Stomach (tissue), 19 donors: ENCODE measurements at regions of chr12 and their contacts with region 1.

Region 1: GRCh38 chr12:40107098-40107802 is 1.4 kb upstream of the SLC2A13 start:
- DNase-seq: peak; percentile 94 to 95
- H3K4me3 ChIP-seq: peak overlapping the region; percentile 37 to 95 (median 64)
- H3K27ac ChIP-seq: peak overlapping the region in 4 of 5 donors; percentile 79 to 91 (median 90)
- H3K4me1 ChIP-seq: peaks cover 10 to 45% (median 37%) of the 10 kb centered on the region in 4 donors
- H3K27me3 ChIP-seq: no peaks in the 10 kb centered on the region
- CTCF ChIP-seq: peak in 5 of 7 experiments; percentile 59 to 99 (median 85)
- EP300 ChIP-seq: no peak
- POLR2A ChIP-seq: no peak

Region 2: GRCh38 chr12:39867631-39868327 is 239.5 kb before region 1 on chr12:
- intact Hi-C with region 1: no loop called
- DNase-seq: no peak
- H3K4me3 ChIP-seq: no peak overlapping the region
- H3K27ac ChIP-seq: no peak overlapping the region
- H3K4me1 ChIP-seq: no peaks in the 10 kb centered on the region
- H3K27me3 ChIP-seq: no peaks in the 10 kb centered on the region
- CTCF ChIP-seq: no peak
- EP300 ChIP-seq: no peak
- POLR2A ChIP-seq: no peak

Region 3: DNA sequence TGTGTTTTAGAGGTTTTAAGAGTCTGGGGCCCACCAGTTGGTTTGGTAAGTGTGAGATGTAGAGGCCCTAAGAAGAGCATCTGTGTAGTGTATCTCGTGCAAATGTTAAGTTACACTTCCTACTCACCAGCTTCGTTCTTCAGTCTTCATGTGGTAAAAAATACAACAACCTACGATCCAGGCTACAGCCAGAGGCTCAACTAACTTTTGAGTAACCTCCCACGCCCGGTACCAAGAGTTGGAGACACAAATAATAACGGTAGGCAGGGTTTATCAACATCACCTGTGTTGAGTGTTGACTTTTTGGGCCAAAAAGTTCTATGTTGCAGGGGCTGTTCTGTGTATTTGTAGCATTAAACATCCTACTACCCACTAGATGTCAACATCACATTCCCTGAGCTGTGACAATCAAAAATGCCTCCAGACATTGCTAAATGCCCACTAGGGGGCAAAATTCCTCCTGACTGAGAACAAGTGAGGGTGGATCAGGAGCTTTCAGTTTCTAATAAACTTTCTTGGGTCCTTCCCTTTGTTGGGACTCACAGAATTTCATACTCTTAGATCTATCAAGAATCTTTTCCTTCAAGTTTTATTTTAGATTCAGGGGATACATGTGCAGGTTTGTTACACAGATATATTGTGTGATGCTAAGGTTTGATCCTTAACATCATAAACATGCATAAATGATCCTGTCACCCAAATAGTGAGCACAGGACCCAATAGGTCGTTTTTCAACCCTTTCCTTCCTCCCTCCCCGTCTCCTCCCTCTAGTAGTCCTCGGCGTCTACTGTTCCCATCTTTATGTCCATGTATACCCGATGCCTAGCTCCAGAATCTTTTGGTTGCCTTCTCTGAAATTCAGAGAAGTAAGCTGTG is 96.1 kb before region 1 on chr12:
- intact Hi-C with region 1: loop called (anchors 5 kb)
- DNase-seq: peak; percentile 45 to 81
- H3K4me3 ChIP-seq: peak overlapping the region; percentile 10 to 24 (median 17)
- H3K27ac ChIP-seq: peak overlapping the region in 1 of 5 donors; percentile 39
- H3K4me1 ChIP-seq: peaks cover 0 to 12% (median 7%) of the 10 kb centered on the region in 4 donors
- H3K27me3 ChIP-seq: no peaks in the 10 kb centered on the region
- CTCF ChIP-seq: peak in 4 of 7 experiments; percentile 21 to 84 (median 62)
- EP300 ChIP-seq: no peak
- POLR2A ChIP-seq: no peak